Activated CD4-positive, alpha-beta T cell treated with anti-CD3 and anti-CD28 coated beads for 36 hours (primary cell): ENCODE measurements at regions of chr12 and their contacts with region 1.

Region 1: DNA sequence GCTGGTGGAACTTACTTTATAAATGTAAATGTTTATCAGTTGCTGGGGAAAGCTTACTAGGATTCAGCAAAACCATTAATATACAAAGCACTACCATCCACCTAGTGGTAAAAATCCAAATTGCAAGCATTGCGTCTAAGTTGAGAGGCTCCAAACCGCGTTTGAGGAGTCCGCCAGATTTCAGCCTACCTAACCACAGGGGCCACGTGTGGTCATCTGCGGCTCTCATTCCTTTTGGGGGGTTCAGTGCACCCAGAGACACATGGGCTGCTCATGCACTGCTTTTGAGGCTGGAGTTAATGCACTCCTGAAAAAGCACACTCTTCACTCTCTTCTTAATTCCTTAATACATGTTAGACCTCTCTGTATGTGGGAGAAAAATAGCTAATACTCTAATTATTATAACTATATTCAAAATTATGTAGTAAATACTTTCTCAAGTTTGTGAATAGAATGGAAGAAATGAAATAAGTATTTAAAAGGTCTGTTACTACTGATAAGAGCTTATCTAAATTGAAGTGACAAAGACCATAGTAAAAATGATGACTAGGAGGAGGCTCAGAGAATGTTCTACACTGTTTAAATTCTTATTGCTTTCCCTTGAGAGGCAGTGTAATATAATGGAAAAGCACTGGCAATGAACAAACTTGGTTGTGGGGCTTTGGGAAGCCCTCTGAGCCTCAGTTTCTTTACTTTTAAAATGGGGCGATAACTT is 41.4 kb upstream of the MANSC4 start:
- DNase-seq: peak; percentile 38
- ATAC-seq: no peak
- H3K4me3 Mint-ChIP-seq: no peak overlapping the region
- H3K27ac Mint-ChIP-seq: no peak overlapping the region
- H3K4me1 Mint-ChIP-seq: peaks cover 33% of the 10 kb centered on the region
- H3K27me3 Mint-ChIP-seq: peaks cover 49% of the 10 kb centered on the region

Region 2: DNA sequence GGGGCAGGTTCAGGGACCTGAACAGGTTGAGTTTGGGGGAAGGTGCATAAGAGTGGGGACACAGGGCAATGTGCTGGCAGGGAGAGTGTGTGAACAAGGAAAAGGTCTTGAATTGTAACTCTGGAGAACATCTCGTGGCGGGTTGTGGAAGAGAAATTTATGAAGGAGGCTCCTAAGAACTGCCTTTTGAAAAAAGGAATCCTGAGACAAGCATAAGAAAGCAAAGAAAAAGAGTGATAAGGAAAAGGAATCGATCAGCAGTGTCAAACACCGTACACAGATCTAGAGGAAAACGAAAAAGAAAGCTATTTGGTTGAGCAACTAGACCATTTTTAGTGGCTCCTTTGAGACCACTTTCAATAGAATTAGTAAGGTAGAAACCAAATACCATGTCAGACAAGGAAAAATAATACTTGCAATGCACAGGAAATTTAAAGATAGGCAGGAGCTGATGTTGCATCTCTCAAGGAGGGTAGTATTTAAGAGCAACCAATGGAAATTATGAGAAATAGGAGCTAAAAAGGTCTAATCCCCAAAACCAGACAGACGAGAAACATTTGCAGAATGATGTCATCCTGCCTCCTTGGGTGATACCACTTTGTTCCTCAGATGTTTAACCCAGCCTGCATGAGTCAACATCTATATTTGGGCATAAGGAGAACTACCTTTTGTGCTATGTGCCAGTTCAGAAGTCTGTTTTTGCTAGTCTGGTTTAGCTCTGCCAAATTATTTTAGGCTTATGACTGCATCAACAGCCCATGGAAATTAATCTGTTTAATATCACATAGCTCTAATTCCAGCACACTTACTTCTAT is 641.8 kb before region 1 on chr12:
- CTCF ChIA-PET with region 1: interaction called, 3 read pairs
- POLR2A ChIA-PET with region 1: no interaction called
- intact Hi-C with region 1: loop called in 1 of 2 experiments (anchors 2 kb)
- DNase-seq: peak; percentile 58
- ATAC-seq: peak; percentile 95
- H3K4me3 Mint-ChIP-seq: peak overlapping the region; percentile 7
- H3K27ac Mint-ChIP-seq: peak overlapping the region; percentile 90
- H3K4me1 Mint-ChIP-seq: peaks cover 41% of the 10 kb centered on the region
- H3K27me3 Mint-ChIP-seq: no peaks in the 10 kb centered on the region

Region 3: DNA sequence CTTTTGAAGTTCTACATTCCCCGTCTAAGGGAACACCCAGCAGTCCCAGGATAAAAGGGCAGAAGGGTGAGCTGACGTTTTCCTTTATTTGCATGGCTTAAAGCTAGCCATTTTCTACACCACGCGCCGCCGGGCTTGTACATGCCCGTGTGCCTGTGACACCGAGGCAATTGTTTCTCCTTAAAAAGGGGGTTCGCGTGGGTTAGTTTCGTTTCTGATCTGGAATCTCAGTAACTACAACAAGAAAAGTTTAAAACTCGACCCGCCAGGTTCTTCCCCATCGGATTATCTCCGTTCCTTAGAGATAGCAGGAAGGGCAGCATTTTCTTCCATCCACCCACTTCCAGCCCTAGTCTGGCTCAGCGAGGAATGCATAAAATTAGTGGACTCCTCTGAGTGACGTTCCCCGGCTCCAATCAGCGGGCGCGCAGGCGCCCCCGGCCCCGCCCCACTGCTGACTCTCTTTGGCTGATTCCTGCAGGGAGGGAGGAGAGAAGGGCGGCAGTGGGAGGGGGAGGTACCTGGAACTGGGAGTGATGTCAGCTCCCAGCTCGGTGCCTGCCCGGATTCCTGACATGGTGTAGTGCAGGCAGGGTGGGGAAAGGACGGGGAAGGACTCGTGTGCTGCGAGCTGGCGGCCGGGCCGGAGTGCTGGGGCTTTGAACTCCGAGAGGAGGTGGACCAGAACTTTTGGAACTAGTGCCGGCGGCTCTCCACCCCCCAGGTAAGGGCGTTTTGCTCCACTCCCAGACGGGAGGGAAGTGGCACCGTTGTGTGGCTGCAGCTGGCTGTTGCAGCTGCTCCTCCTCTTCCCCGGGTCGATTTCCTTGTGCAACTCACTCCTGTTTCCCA is 297.5 kb before region 1 on chr12 and contains the start of gene PPFIBP1:
- CTCF ChIA-PET with region 1: no interaction called
- POLR2A ChIA-PET with region 1: no interaction called
- intact Hi-C with region 1: loop called in 1 of 2 experiments (anchors 5 kb)
- DNase-seq: peak; percentile 98
- ATAC-seq: peak; percentile 99
- H3K4me3 Mint-ChIP-seq: peak within 1 kb of the TSS; percentile 91
- H3K27ac Mint-ChIP-seq: peak within 1 kb of the TSS; percentile 87
- H3K4me1 Mint-ChIP-seq: peaks cover 19% of the 10 kb centered on the region
- H3K27me3 Mint-ChIP-seq: peaks cover 19% of the 10 kb centered on the region
- total RNA-seq, gene PPFIBP1: 14.9 to 15.6 TPM

Region 4: GRCh38 chr12:27667540-27667939 is 153.9 kb before region 1 on chr12:
- CTCF ChIA-PET with region 1: no interaction called
- POLR2A ChIA-PET with region 1: no interaction called
- intact Hi-C with region 1: no loop called
- DNase-seq: peak; percentile 18
- ATAC-seq: peak; percentile 66
- H3K4me3 Mint-ChIP-seq: no peak overlapping the region
- H3K27ac Mint-ChIP-seq: no peak overlapping the region
- H3K4me1 Mint-ChIP-seq: no peaks in the 10 kb centered on the region
- H3K27me3 Mint-ChIP-seq: no peaks in the 10 kb centered on the region

Region 5: DNA sequence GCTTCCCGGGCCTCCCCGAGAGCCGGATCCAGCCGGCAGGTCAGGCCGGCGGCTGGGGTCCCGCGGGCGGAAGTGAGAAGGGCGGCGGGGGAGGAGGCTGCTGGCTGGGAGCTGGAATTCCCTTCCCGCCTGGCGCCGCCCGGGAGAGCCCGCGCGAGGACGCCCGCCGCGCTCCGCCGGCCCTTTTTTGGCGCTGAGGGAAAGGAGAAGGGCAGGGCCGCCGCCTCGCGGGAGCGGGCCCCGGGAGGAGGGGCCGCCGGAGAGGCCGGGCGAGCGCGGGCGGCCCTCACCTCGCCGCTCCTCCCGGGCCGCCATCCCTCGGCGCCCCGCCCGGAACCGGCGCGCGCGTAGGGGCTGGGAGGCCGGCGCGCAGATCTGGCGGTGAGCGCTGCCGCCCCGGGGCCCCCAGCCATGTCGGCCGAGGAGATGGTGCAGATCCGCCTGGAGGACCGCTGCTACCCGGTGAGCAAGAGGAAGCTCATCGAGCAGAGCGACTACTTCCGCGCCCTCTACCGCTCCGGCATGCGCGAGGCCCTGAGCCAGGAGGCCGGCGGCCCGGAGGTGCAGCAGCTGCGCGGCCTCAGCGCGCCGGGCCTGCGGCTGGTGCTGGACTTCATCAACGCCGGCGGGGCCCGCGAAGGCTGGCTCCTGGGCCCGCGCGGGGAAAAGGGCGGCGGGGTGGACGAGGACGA is 41.4 kb before region 1 on chr12 and contains the starts of genes KLHL42 and MANSC4:
- CTCF ChIA-PET with region 1: interaction called, 20 read pairs
- POLR2A ChIA-PET with region 1: interaction called, 5 read pairs
- intact Hi-C with region 1: loop called (anchors 1 kb)
- DNase-seq: peak; percentile 80
- ATAC-seq: peak; percentile 86
- H3K4me3 Mint-ChIP-seq: peak within 1 kb of the TSS; percentile 80
- H3K27ac Mint-ChIP-seq: peak within 1 kb of the TSS; percentile 83
- H3K4me1 Mint-ChIP-seq: peaks cover 34% of the 10 kb centered on the region
- H3K27me3 Mint-ChIP-seq: no peaks in the 10 kb centered on the region
- total RNA-seq, gene KLHL42: 7.1 to 9.2 TPM
- total RNA-seq, gene MANSC4: not detected

Region 6: DNA sequence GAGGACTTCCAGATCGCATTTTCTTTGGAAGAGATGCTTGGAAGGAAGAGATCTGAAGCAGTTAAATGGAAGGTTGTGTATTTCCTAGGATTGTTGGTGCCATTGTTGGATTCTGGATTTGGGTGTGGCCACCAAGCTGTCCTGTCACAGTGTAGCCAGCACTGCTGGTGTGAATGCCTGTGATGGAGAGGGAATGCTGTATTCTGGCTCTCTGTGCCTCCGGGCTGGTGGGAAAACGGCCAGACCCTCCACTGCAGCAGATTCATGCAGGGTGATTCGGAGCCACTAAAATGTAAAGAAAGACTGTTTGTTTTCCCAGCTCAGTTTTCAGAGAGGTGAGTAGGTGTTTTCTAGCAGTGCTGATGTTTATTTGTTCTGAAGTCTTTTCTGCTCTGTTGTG is 10.7 kb before region 1 on chr12:
- CTCF ChIA-PET with region 1: interaction called, 79 read pairs
- POLR2A ChIA-PET with region 1: interaction called, 6 read pairs
- intact Hi-C with region 1: no loop called
- DNase-seq: no peak
- ATAC-seq: no peak
- H3K4me3 Mint-ChIP-seq: no peak overlapping the region
- H3K27ac Mint-ChIP-seq: no peak overlapping the region
- H3K4me1 Mint-ChIP-seq: peaks cover 33% of the 10 kb centered on the region
- H3K27me3 Mint-ChIP-seq: peaks cover 33% of the 10 kb centered on the region

Region 7: DNA sequence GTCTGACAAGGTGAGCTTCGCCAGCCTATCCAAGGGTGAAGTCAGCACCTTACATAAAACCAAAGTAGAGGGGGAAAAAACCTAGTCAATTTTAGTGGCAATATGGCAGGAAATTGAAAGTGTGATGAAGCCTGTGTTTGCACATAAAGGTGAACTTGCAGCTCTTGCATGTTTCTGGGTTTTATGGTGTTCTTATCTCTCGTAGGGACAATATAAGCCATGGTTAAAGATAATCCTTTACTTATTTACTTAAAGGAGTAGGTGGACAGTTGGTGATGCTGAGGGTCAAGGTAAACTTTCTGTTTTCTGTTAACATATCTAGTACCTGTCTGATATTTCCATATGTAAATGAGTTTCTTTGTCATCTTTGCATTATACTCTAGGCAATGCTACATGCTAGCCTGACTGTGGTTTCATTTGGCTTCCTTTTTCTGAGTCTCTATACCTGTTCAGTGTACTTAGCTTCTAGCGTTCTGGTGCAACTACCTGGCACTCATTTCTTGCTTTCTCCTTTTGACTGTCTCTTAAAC is 401.7 kb after region 1 on chr12:
- CTCF ChIA-PET with region 1: no interaction called
- POLR2A ChIA-PET with region 1: no interaction called
- intact Hi-C with region 1: loop called (anchors 1 to 10 kb)
- DNase-seq: peak; percentile 25
- ATAC-seq: peak; percentile 94
- H3K4me3 Mint-ChIP-seq: peak overlapping the region; percentile 29
- H3K27ac Mint-ChIP-seq: peak overlapping the region; percentile 77
- H3K4me1 Mint-ChIP-seq: peaks cover 48% of the 10 kb centered on the region
- H3K27me3 Mint-ChIP-seq: no peaks in the 10 kb centered on the region

Region 8: GRCh38 chr12:29082522-29082921 is 1261.1 kb after region 1 on chr12:
- CTCF ChIA-PET with region 1: no interaction called
- POLR2A ChIA-PET with region 1: no interaction called
- intact Hi-C with region 1: loop called in 1 of 2 experiments (anchors 5 kb)
- DNase-seq: no peak
- ATAC-seq: peak; percentile 99
- H3K4me3 Mint-ChIP-seq: no peak overlapping the region
- H3K27ac Mint-ChIP-seq: no peak overlapping the region
- H3K4me1 Mint-ChIP-seq: peaks cover 11% of the 10 kb centered on the region
- H3K27me3 Mint-ChIP-seq: peaks cover 10% of the 10 kb centered on the region